Activated naive CD4-positive, alpha-beta T cell treated with anti-CD3 and anti-CD28 coated beads for 36 hours (primary cell): ENCODE measurements at regions of chr3 and their contacts with region 1.

Region 1: DNA sequence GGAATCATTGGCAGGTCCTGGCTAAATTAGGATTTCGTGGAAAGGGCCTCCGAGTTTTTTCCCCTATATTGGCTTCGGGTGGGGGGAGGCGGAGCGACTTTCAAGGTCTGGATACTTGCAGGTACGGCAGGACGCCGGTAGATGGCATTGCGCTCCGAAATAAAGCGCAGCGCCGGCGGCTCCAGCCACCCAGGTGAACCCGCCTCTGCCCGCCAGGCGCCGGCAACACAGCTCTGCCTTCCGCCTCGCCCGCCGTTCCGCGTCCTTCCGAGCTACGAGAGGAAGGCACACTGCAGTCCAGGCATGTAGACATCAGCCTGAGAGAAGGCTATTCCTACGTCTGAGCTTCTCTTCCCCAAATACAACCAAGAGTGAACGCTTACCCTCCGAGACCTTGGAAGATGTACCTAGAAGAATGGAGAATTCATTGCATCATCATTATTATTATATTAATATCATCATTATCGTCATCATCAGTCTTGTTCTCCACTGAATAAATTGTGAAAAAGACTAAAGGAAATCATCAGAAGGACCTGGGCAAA is 514.1 kb downstream of the MECOM start:
- DNase-seq: peak; percentile 82
- H3K4me3 Mint-ChIP-seq: peak overlapping the region; percentile 65
- H3K27ac Mint-ChIP-seq: no peak overlapping the region
- H3K4me1 Mint-ChIP-seq: peaks cover 20% of the 10 kb centered on the region
- H3K27me3 Mint-ChIP-seq: peaks cover 63% of the 10 kb centered on the region

Region 2: GRCh38 chr3:168705412-168705811 is 444.0 kb before region 1 on chr3:
- CTCF ChIA-PET with region 1: no interaction called
- intact Hi-C with region 1: no loop called
- DNase-seq: no peak
- H3K4me3 Mint-ChIP-seq: no peak overlapping the region
- H3K27ac Mint-ChIP-seq: no peak overlapping the region
- H3K4me1 Mint-ChIP-seq: no peaks in the 10 kb centered on the region
- H3K27me3 Mint-ChIP-seq: no peaks in the 10 kb centered on the region

Region 3: GRCh38 chr3:168865022-168865551 is 284.3 kb before region 1 on chr3:
- CTCF ChIA-PET with region 1: no interaction called
- intact Hi-C with region 1: loop called (anchors 2 kb)
- DNase-seq: no peak
- H3K4me3 Mint-ChIP-seq: no peak overlapping the region
- H3K27ac Mint-ChIP-seq: no peak overlapping the region
- H3K4me1 Mint-ChIP-seq: no peaks in the 10 kb centered on the region
- H3K27me3 Mint-ChIP-seq: no peaks in the 10 kb centered on the region

Region 4: DNA sequence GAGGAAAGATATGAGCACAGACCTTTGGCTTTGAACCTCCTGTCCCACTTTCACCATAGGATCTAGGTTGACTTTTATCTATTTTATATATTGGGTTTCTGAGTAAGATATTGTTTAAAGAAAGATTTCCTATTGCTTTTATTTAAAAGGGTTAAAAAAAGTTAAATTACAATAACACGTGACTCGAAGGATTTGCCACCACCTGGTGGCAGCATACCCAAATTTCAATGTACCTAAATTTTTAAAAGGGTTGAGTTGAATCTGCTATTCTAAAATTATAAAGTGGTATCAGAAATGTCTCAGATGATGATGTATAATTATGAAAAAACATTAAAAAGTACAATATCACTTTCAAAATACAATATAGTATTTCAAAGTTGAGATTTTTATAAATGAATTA is 145.7 kb after region 1 on chr3:
- CTCF ChIA-PET with region 1: interaction called, 4 read pairs
- intact Hi-C with region 1: loop called (anchors 1 kb)
- DNase-seq: peak; percentile 8
- H3K4me3 Mint-ChIP-seq: no peak overlapping the region
- H3K27ac Mint-ChIP-seq: no peak overlapping the region
- H3K4me1 Mint-ChIP-seq: no peaks in the 10 kb centered on the region
- H3K27me3 Mint-ChIP-seq: peaks cover 7% of the 10 kb centered on the region